ENCODE measurements at regions of chr9 and their contacts with region 1.

Region 1: GRCh38 chr9:128034821-128035764 is 32.0 kb downstream of the NAIF1 start:
- DNase-seq: peak; percentile 89
- ATAC-seq: peak; percentile 98
- H3K4me3 ChIP-seq: no peak overlapping the region
- H3K27ac ChIP-seq: peak overlapping the region; percentile 83
- H3K4me1 ChIP-seq: peaks cover 8% of the 10 kb centered on the region
- H3K27me3 ChIP-seq: no peaks in the 10 kb centered on the region
- CTCF ChIP-seq: peak; percentile 81

Region 2: DNA sequence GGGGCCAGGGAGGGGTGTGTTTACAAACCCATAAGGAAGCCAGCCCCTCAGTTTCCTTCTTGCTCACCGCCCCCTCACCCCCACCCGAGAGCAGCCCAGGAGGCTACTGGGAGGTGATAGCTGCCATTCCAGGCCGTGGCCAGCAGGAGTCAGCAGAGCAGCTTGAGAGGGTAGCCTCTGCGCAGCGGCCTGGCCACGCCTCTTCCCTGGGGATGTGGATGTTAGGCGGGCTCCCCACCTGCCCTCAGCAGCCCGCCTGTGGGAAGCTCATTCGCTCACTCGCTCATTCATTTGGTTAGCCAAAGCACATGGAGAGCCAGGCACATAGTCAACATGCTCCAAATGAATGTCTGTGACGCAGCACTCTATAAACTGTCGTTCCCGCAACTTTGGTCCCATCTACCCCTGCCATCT is 91.4 kb before region 1 on chr9:
- CTCF ChIA-PET with region 1: interaction called, 8 read pairs
- POLR2A ChIA-PET with region 1: no interaction called
- in situ Hi-C with region 1: no loop called
- intact Hi-C with region 1: loop called (anchors 5 kb)
- DNase-seq: no peak
- ATAC-seq: peak; percentile 69
- H3K4me3 ChIP-seq: no peak overlapping the region
- H3K27ac ChIP-seq: peak overlapping the region; percentile 57
- H3K4me1 ChIP-seq: peaks cover 83% of the 10 kb centered on the region
- H3K27me3 ChIP-seq: no peaks in the 10 kb centered on the region
- CTCF ChIP-seq: peak; percentile 86

Region 3: GRCh38 chr9:128149001-128149701 is 114.1 kb after region 1 on chr9 and contains the start of gene LCN2:
- CTCF ChIA-PET with region 1: no interaction called
- POLR2A ChIA-PET with region 1: no interaction called
- in situ Hi-C with region 1: no loop called
- intact Hi-C with region 1: no loop called
- DNase-seq: no peak
- ATAC-seq: no peak
- H3K4me3 ChIP-seq: no peak within 1 kb of the TSS
- H3K27ac ChIP-seq: no peak within 1 kb of the TSS
- H3K4me1 ChIP-seq: peaks cover 5% of the 10 kb centered on the region
- H3K27me3 ChIP-seq: no peaks in the 10 kb centered on the region
- CTCF ChIP-seq: no peak
- total RNA-seq, gene LCN2: 1.0 TPM

Region 4: DNA sequence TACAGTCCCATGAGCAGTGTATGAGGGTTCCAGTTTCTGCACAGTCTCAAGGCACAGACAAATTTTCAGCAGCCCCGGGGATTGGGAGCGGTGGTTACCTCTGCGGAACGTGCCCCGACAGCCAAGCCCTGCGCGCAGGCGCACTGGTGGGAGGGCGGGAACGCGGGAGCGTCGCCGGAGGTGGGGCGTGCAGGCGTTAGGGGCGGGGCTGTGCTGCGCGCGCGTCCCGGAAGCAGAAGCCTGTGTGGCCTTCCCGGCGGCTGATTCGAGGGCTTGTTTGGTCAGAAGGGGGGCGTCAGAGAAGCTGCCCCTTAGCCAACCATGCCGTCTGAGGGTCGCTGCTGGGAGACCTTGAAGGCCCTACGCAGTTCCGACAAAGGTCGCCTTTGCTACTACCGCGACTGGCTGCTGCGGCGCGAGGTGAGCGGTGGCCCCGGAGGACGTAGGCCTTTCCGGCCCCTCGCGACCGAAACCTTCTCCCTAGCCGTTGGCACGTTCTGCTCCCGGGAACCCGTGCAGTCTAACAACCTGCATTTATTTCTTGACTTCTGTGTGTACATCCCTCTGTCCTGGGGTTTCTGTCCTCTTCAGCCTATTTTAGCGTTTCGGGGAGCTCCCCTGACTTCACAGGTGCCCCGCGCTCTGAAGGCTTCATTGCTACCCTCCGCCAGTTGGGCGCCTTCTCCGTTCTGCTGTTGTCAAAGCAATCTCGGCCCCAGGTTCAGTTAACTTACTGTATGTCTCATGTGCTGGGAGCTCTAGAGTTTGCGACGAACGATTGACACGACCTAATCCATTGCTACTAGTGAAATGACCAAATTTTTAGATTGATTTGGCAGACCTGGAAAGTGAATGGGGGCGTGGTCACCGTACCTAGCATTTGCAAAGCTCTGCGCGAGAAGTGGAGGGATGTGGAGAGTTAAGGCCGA is 469.7 kb after region 1 on chr9 and contains the start of gene GLE1:
- CTCF ChIA-PET with region 1: no interaction called
- POLR2A ChIA-PET with region 1: no interaction called
- in situ Hi-C with region 1: no loop called
- intact Hi-C with region 1: no loop called
- DNase-seq: peak; percentile 35
- ATAC-seq: peak; percentile 96
- H3K4me3 ChIP-seq: peak within 1 kb of the TSS; percentile 90 to 91
- H3K27ac ChIP-seq: peak within 1 kb of the TSS; percentile 90
- H3K4me1 ChIP-seq: peaks cover 7% of the 10 kb centered on the region
- H3K27me3 ChIP-seq: no peaks in the 10 kb centered on the region
- CTCF ChIP-seq: no peak
- total RNA-seq, gene GLE1: 25.9 TPM